ENCODE measurements at regions of chr15 and their contacts with region 1.

Region 1: GRCh38 chr15:68559345-68560310 is 19.2 kb upstream of the CORO2B start:
- DNase-seq: peak; percentile 74
- ATAC-seq: peak; percentile 92
- H3K4me3 Mint-ChIP-seq: peak overlapping the region; percentile 56
- H3K27ac Mint-ChIP-seq: no peak overlapping the region
- H3K4me1 Mint-ChIP-seq: peaks cover 16% of the 10 kb centered on the region
- H3K27me3 Mint-ChIP-seq: peaks cover 50% of the 10 kb centered on the region

Region 2: DNA sequence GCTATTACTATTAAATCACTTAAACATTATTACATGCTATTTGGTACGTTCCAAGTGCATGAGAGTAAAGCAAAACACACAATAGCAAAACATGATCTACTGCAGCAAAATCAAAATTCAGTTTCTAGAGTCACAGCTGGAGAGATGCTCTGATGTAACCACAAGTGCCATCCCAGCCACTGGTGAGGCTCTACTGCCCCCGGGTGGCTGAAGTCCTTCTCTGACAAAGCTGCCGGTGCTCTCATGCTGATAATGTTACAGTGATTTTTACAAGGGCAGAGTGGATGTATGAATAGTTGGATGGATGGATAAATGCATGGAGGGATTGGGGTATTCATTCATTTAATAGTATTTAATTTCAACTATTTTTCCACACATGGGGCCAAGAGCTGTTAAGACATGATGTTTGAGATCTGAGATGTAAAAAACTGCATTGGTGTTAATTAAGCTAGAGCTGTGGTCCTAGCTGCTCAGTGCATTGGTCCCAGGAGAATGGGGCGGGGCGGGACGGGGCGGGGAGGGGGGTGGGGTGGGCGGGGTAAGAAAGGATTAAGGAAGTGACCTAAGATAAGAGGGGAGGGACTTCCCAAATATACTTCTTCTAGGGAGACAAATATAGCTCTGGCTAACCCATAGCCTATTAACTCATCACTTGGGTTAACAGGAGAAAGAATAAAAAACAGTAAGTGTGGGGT is 365.4 kb after region 1 on chr15:
- CTCF ChIA-PET with region 1: interaction called, 13 read pairs
- DNase-seq: peak; percentile 71
- ATAC-seq: no peak
- H3K4me3 Mint-ChIP-seq: no peak overlapping the region
- H3K27ac Mint-ChIP-seq: no peak overlapping the region
- H3K4me1 Mint-ChIP-seq: peaks cover 2% of the 10 kb centered on the region
- H3K27me3 Mint-ChIP-seq: peaks cover 46% of the 10 kb centered on the region